Posterior cingulate gyrus (tissue), 11 donors: ENCODE measurements at regions of chr18 and their contacts with region 1.

Region 1: GRCh38 chr18:24212939-24213338 is 74.1 kb downstream of the CABYR start:
- DNase-seq: no peak

Region 2: DNA sequence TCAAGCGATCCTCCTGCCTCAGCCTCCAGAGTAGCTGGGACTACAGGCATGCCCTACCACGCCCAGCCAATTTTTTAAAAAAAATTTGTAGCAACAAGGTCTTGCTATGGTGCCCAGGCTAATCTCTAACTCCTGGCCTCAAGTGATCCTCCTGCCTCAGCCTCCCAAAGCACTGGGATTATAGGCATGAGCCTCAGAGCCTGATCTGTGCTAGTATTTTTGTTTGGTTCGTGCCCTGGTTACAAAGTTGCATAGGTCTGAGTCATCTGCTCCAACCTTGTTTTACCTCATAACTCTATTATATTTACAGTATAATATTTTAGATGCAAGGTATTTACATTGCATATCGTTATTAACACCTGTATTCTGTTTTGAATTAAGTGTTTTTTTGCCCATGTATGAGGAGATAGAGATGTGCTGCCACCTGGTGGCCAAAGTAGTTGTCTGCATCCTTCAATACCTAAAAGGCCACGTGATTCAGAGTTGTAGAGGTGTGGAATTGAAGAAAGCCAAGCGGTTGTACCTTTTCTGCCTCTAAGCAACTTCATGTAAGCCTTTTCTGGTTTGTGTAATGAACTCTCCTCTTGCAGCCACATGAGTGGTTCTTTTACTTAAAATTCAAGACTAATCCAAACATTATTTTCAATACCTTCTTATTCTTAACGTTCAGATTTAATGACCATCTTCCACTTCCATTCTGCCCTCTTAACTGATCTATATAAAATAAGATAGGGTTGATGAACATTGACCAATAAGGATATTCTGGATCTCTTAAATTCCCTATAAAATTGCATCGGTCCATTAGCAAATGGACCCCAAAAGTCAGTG is 94.0 kb before region 1 on chr18:
- intact Hi-C with region 1: no loop called
- DNase-seq: peak in 9 of 10 donors; percentile 23 to 93 (median 64)

Region 3: DNA sequence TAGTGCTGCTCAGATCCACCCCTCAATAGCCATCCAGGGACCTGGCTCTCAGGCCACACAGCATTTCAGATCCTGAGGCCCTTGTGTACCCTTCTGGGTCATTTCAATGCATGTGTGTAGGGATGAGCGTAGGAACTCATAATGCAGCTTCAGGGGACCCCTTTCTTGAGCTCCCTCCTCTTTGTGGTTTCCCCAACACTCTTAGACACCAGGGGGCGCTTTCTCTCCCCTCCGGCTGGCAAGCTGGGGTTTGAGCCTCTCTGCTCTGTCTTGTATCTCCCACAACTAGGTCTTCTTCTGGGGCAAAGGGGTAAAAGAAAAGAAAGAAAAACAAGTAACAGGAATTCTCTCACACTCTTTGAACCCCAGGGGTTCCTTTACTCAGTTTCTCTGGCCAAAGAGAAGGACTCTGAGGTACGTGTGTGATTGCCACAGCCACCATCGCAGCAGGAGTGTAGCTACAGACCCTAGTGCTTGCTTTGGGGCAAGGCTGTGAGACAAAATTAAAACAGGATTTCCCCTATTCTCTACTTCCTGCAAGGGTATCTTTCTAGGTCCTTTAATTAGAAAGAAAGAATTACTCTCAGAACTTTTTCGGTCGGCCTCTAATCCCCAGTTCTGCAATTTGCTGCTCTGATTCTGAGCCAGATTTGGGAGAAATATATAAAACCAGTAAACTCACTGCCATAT is 36.1 kb before region 1 on chr18:
- intact Hi-C with region 1: loop called (anchors 2 kb)
- DNase-seq: peak in 8 of 10 donors; percentile 55 to 93 (median 82)

Region 4: DNA sequence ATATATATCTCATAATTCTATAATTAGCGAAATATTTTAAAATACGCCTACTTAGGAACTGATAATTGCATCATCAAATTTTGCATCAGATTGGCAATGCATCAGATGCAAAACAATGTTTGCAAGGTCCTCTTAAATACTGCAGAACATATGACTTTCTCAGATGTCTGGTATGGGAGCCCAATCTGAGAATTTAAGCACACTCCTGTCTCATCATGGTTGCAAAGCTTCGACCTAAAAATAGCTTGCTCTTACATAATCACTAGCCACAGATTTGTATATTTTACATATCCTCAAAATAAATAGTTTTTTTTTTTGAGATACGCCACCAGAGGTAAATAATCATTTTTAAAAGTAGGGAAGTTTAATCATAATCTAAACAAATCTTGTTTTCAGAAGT is 49.1 kb after region 1 on chr18:
- intact Hi-C with region 1: loop called (anchors 5 kb)
- DNase-seq: no peak